ENCODE measurements at regions of chr17 and their contacts with region 1.

Region 1: GRCh38 chr17:63075969-63076368 is 109.9 kb downstream of the TANC2 start:
- DNase-seq: no peak
- H3K4me3 ChIP-seq: no peak overlapping the region
- H3K27ac ChIP-seq: no peak overlapping the region
- H3K4me1 ChIP-seq: no peaks in the 10 kb centered on the region
- H3K27me3 ChIP-seq: no peaks in the 10 kb centered on the region
- CTCF ChIP-seq: no peak
- EP300 ChIP-seq: no peak
- POLR2A ChIP-seq: no peak

Region 2: GRCh38 chr17:62703775-62704378 is 372.1 kb before region 1 on chr17:
- intact Hi-C with region 1: loop called (anchors 10 kb)
- DNase-seq: no peak
- H3K4me3 ChIP-seq: peak overlapping the region; percentile 65 to 90 (median 72)
- H3K27ac ChIP-seq: peak overlapping the region; percentile 61 to 82 (median 74)
- H3K4me1 ChIP-seq: peaks cover 20 to 29% (median 26%) of the 10 kb centered on the region in 4 donors
- H3K27me3 ChIP-seq: peaks cover 0 to 5% (median 0%) of the 10 kb centered on the region in 4 donors
- CTCF ChIP-seq: peak; percentile 85 to 94 (median 86)
- EP300 ChIP-seq: no peak
- POLR2A ChIP-seq: no peak

Measured in esophagus muscularis mucosa (tissue), 4 donors.